ENCODE measurements at regions of chr3 and their contacts with region 1.

Region 1: GRCh38 chr3:152241142-152242017 is 27.3 kb upstream of the MBNL1 start:
- DNase-seq: no peak
- ATAC-seq: peak; percentile 18
- H3K4me3 Mint-ChIP-seq: peak overlapping the region; percentile 92
- H3K27ac Mint-ChIP-seq: peak overlapping the region; percentile 91
- H3K4me1 Mint-ChIP-seq: peaks cover 58% of the 10 kb centered on the region
- H3K27me3 Mint-ChIP-seq: no peaks in the 10 kb centered on the region

Region 2: DNA sequence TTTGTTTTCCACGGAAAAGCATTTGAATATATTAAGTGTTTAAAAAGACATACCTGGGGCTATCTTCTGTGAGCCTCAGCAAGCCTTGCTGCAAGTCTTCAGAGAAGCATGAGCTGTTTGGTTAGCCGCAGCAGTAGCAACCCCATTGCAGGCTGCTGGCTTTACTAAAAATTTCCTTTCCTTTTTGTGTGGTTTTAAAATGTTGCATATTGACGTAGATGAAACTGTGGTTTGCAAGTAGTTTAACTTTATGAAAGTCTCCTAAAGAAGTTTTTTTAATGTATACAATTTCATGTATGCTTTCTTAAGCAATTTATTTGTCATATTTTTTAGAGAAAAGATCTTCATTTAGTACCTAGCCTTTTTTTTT is 1038.3 kb before region 1 on chr3 and contains the start of gene GPR171:
- CTCF ChIA-PET with region 1: no interaction called
- POLR2A ChIA-PET with region 1: interaction called, 18 read pairs
- DNase-seq: peak; percentile 85
- ATAC-seq: peak; percentile 73
- H3K4me3 Mint-ChIP-seq: peak within 1 kb of the TSS; percentile 87
- H3K27ac Mint-ChIP-seq: peak within 1 kb of the TSS; percentile 94
- H3K4me1 Mint-ChIP-seq: peaks cover 59% of the 10 kb centered on the region
- H3K27me3 Mint-ChIP-seq: no peaks in the 10 kb centered on the region
- total RNA-seq, gene GPR171: 115 to 124 TPM

Region 3: DNA sequence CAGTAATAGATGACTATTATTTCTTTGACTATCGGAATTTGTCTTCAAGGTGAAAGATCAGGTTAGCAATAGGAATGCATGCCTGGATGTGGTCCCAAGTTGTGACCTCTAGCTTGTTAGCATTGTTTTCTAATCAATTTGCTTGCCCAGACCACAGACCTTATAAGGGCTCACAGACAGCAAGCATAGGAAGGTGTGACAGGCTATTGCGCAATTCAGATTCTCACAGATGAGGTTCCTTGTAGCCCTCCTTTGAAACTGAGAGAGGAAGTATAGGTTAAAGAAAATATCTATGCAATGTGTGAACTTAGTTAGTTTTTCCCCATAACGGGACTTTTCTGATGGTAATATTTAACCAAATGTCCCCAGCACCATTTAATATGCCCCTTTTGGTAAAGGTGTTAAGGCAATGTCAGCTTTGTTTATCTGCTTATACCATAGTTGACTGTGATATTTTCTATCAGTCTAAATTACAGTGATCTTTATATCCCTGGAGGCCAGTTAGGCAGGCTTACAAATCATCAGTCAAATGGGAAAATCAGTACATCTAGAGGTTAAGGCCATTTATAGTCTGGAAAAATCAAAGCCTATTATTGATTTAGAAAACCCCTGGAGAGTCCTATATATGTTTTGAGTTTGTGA is 140.8 kb before region 1 on chr3:
- CTCF ChIA-PET with region 1: no interaction called
- POLR2A ChIA-PET with region 1: no interaction called
- DNase-seq: peak; percentile 32
- ATAC-seq: peak; percentile 58
- H3K4me3 Mint-ChIP-seq: no peak overlapping the region
- H3K27ac Mint-ChIP-seq: no peak overlapping the region
- H3K4me1 Mint-ChIP-seq: peaks cover 9% of the 10 kb centered on the region
- H3K27me3 Mint-ChIP-seq: peaks cover 8% of the 10 kb centered on the region

Region 4: DNA sequence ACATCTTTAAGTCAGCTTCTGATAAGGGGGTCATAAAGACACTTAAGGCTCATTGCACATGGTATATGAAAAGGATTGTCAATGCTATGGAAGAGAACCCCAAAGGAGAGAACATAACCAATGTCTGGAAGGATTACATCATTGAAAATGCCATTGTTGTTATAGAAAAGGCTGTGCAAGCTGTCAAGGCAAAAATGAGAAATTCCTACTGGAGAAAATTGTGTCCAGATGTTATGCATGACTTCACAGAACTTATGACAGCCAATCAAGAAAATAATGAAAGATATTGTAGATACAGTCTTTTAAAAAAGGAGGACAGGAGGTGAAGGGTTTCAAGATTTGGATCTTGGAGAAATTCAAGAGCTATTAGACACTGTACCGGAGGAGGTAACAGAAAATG is 68.9 kb before region 1 on chr3:
- CTCF ChIA-PET with region 1: no interaction called
- POLR2A ChIA-PET with region 1: no interaction called
- DNase-seq: no peak
- ATAC-seq: no peak
- H3K4me3 Mint-ChIP-seq: no peak overlapping the region
- H3K27ac Mint-ChIP-seq: no peak overlapping the region
- H3K4me1 Mint-ChIP-seq: no peaks in the 10 kb centered on the region
- H3K27me3 Mint-ChIP-seq: peaks cover 8% of the 10 kb centered on the region

Region 5: DNA sequence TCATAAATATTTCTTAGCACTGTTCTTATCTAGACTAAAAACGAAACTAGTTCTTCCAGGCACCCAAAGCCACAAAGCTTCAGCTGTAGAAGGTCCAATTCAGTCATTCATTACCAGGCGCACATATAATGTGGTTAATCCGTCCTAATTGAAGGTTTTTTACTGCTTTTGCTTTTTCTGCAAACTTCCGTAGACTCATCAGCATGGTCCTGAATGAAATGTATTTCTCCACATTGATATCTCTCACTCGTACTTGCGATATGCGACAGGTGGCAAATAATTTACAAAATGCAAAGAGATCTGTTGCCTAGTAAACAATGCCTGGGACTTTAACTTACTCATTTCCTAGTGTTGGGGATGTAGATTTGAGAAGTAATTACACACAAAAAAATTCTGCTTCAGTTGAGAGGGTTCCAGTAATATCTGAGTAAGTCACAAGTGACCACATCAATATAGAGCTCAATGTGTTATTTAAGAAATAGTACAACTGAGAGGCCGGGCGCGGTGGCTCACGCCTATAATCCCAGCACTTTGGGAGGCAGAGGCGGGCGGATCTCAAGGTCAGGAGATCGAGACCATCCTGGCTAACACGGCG is 47.6 kb before region 1 on chr3:
- CTCF ChIA-PET with region 1: interaction called, 33 read pairs
- POLR2A ChIA-PET with region 1: interaction called, 80 read pairs
- DNase-seq: peak; percentile 66
- ATAC-seq: peak; percentile 75
- H3K4me3 Mint-ChIP-seq: peak overlapping the region; percentile 71
- H3K27ac Mint-ChIP-seq: peak overlapping the region; percentile 83
- H3K4me1 Mint-ChIP-seq: peaks cover 82% of the 10 kb centered on the region
- H3K27me3 Mint-ChIP-seq: no peaks in the 10 kb centered on the region

Region 6: DNA sequence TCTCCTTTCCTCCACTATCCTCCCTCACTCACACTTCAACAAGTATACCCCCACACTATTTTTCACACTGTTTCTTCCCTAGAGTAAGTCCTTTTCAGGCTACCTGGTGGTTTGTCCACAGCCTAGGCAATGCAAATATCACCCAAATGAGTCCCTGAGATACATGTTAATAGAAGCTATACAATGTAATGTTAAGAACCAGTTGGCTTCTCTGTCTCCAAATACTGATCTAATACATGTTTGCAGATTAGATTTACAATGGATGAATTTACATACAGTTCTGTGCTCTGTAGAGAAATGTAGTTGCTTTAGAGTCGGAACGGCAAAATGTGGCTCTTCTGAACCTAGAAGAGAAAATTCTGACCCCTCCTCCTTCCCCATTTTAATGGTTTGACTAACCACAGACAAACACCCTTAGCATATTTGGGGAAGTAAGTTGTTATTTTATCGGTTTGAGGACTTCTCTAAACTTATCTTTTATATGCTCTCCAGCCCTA is 36.2 kb before region 1 on chr3:
- CTCF ChIA-PET with region 1: interaction called, 33 read pairs
- POLR2A ChIA-PET with region 1: interaction called, 80 read pairs
- DNase-seq: no peak
- ATAC-seq: peak; percentile 48
- H3K4me3 Mint-ChIP-seq: peak overlapping the region; percentile 75
- H3K27ac Mint-ChIP-seq: peak overlapping the region; percentile 85
- H3K4me1 Mint-ChIP-seq: peaks cover 69% of the 10 kb centered on the region
- H3K27me3 Mint-ChIP-seq: no peaks in the 10 kb centered on the region

Region 7: GRCh38 chr3:152222327-152222726 is 19.1 kb before region 1 on chr3:
- CTCF ChIA-PET with region 1: interaction called, 9 read pairs
- POLR2A ChIA-PET with region 1: interaction called, 13 read pairs
- DNase-seq: no peak
- ATAC-seq: no peak
- H3K4me3 Mint-ChIP-seq: peak overlapping the region; percentile 51
- H3K27ac Mint-ChIP-seq: peak overlapping the region; percentile 62
- H3K4me1 Mint-ChIP-seq: peaks cover 64% of the 10 kb centered on the region
- H3K27me3 Mint-ChIP-seq: no peaks in the 10 kb centered on the region

Region 8: GRCh38 chr3:152258448-152259393 is 17.3 kb after region 1 on chr3:
- CTCF ChIA-PET with region 1: interaction called, 41 read pairs
- POLR2A ChIA-PET with region 1: interaction called, 66 read pairs
- DNase-seq: peak; percentile 76
- ATAC-seq: peak; percentile 74
- H3K4me3 Mint-ChIP-seq: peak overlapping the region; percentile 71
- H3K27ac Mint-ChIP-seq: peak overlapping the region; percentile 93
- H3K4me1 Mint-ChIP-seq: peaks cover 81% of the 10 kb centered on the region
- H3K27me3 Mint-ChIP-seq: no peaks in the 10 kb centered on the region

Region 9: DNA sequence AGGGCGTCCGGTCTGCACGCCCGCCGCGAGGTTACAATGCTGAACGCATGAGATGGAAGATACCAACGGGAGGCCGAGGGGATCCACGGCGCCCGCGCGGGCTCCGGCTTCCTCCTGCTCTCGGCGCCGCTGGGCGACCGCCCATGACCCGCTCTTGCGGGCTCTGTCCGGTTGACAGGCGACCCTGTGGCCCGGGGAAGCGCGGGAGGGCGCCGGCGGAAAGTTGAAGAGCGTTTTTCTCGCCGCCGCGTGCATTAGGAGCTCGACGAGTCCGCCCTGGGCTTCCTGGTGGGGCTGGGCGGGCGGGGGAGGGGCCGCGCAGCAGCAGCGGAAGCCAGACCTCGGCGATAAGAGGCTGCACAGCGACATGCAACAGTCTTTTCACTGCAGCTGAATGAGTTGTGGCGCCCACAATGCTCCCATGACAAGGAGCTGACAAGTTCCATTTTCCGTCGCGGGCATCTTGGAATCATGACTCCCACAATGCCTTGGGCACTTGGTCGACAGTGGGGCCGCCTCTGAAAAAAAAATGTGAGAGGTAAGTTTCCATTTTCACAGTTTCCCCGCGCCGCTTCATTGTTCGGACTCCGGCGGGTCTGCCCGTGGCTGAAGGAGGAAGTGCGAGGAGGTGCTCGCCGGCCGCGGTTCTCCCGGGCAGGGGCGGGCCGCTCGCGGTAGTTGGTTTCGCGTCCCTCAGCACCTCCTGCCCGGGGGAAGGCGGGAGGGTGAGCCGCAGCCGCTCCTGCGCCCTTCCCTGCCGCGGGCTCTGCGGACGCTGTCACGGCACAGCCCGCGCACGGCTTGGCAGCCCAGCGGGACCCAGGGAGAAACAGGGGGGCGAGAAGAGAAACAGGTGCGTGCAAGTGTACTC is 27.4 kb after region 1 on chr3 and contains the start of gene MBNL1:
- CTCF ChIA-PET with region 1: interaction called, 27 read pairs
- POLR2A ChIA-PET with region 1: interaction called, 211 read pairs
- DNase-seq: peak; percentile 94
- ATAC-seq: peak; percentile 74
- H3K4me3 Mint-ChIP-seq: peak within 1 kb of the TSS; percentile 90
- H3K27ac Mint-ChIP-seq: peak within 1 kb of the TSS; percentile 87
- H3K4me1 Mint-ChIP-seq: peaks cover 49% of the 10 kb centered on the region
- H3K27me3 Mint-ChIP-seq: no peaks in the 10 kb centered on the region
- total RNA-seq, gene MBNL1: 469 to 504 TPM

Region 10: GRCh38 chr3:152328841-152329240 is 87.5 kb after region 1 on chr3:
- CTCF ChIA-PET with region 1: no interaction called
- POLR2A ChIA-PET with region 1: no interaction called
- DNase-seq: no peak
- ATAC-seq: no peak
- H3K4me3 Mint-ChIP-seq: no peak overlapping the region
- H3K27ac Mint-ChIP-seq: peak overlapping the region; percentile 18
- H3K4me1 Mint-ChIP-seq: peaks cover 67% of the 10 kb centered on the region
- H3K27me3 Mint-ChIP-seq: no peaks in the 10 kb centered on the region

Region 11: DNA sequence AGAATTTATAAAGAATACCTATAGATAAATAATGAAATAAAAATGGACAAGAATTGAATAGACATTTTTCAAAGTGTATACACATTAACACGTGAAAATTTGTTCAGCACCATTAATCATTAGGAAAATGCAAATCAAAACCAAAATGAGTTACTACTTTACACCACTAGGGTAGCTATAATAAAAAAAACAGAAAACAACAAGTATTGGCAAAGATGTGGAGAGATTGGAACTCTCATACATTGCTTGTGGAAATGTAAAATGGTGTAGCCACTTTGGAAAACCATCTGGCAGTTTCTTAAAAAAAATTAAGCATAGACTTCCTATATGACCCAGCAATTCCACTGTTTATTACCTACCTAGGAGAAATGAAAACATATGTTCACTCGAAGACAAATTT is 420.8 kb after region 1 on chr3:
- CTCF ChIA-PET with region 1: no interaction called
- POLR2A ChIA-PET with region 1: no interaction called
- DNase-seq: no peak
- ATAC-seq: no peak
- H3K4me3 Mint-ChIP-seq: no peak overlapping the region
- H3K27ac Mint-ChIP-seq: no peak overlapping the region
- H3K4me1 Mint-ChIP-seq: peaks cover under 1% of the 10 kb centered on the region
- H3K27me3 Mint-ChIP-seq: no peaks in the 10 kb centered on the region

Measured in activated CD8-positive, alpha-beta T cell treated with anti-CD3 and anti-CD28 coated beads, Interleukin-2, amount 10 ng/mL, durations not matched to agents 7 days and 5 days (primary cell).